T-cell (primary cell): ENCODE measurements at regions of chr16 and their contacts with region 1.

Region 1: GRCh38 chr16:82882982-82883835 is 256.4 kb downstream of the CDH13 start:
- DNase-seq: no peak
- ATAC-seq: no peak
- H3K4me3 ChIP-seq: no peak overlapping the region
- H3K4me3 Mint-ChIP-seq: no peak overlapping the region
- H3K27ac ChIP-seq: no peak overlapping the region
- H3K27ac Mint-ChIP-seq: no peak overlapping the region
- H3K4me1 ChIP-seq: no peaks in the 10 kb centered on the region
- H3K4me1 Mint-ChIP-seq: no peaks in the 10 kb centered on the region
- H3K27me3 ChIP-seq: no peaks in the 10 kb centered on the region
- H3K27me3 Mint-ChIP-seq: peaks cover 0 to 7% of the 10 kb centered on the region in 2 donors

Region 2: GRCh38 chr16:82835487-82836155 is 47.6 kb before region 1 on chr16:
- CTCF ChIA-PET with region 1: no interaction called
- POLR2A ChIA-PET with region 1: no interaction called
- DNase-seq: no peak
- ATAC-seq: no peak
- H3K4me3 ChIP-seq: no peak overlapping the region
- H3K4me3 Mint-ChIP-seq: no peak overlapping the region
- H3K27ac ChIP-seq: no peak overlapping the region
- H3K27ac Mint-ChIP-seq: no peak overlapping the region
- H3K4me1 ChIP-seq: no peaks in the 10 kb centered on the region
- H3K4me1 Mint-ChIP-seq: no peaks in the 10 kb centered on the region
- H3K27me3 ChIP-seq: peaks cover 0 to 5% of the 10 kb centered on the region in 2 experiments
- H3K27me3 Mint-ChIP-seq: no peaks in the 10 kb centered on the region

Region 3: GRCh38 chr16:82895843-82896242 is 12.6 kb after region 1 on chr16:
- CTCF ChIA-PET with region 1: no interaction called
- POLR2A ChIA-PET with region 1: interaction called in 1 of 2 experiments, 18 read pairs
- DNase-seq: no peak
- ATAC-seq: no peak
- H3K4me3 ChIP-seq: no peak overlapping the region
- H3K4me3 Mint-ChIP-seq: no peak overlapping the region
- H3K27ac ChIP-seq: no peak overlapping the region
- H3K27ac Mint-ChIP-seq: no peak overlapping the region
- H3K4me1 ChIP-seq: no peaks in the 10 kb centered on the region
- H3K4me1 Mint-ChIP-seq: no peaks in the 10 kb centered on the region
- H3K27me3 ChIP-seq: peaks cover 0 to 2% of the 10 kb centered on the region in 2 experiments
- H3K27me3 Mint-ChIP-seq: no peaks in the 10 kb centered on the region